Left ventricle myocardium superior (tissue), 1 donor: ENCODE measurements at regions of chr16 and their contacts with region 1.

Region 1: DNA sequence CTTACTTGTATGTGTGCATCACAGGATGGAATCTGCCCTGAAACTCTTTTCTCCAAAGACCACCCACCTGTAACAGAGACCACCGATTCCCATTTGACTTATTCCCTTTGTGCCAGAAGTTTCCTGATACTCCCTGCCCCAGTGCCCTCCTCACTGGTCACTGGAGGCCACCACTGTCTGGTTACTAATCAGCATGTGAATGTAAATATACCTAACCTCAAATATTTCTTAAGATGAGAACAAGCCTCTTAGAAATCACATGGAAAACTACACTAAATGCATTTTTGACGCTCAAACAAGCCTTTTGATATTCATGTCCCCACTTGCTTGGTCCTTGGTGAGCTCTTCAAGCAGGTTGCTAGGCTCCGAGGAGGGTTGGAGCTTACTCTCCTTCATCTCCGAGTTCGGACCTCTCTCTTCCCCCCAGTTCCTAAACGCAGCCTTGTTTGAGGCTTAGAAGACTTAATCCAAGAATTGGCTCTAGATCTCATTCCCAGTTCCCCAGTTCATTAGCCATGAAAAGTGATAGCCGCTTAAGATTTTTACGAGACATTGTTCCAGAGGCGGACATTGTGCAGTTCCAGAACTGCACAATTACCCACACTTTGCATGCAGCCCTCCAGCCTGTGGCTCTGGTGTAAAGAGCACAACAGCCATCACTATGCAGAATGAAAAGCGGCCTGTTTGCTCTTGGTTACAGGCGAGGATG is 579.2 kb upstream of the PSMD7 start:
- DNase-seq: no peak
- ATAC-seq: no peak

Region 2: GRCh38 chr16:73483076-73483791 is 234.2 kb before region 1 on chr16:
- intact Hi-C with region 1: loop called (anchors 5 kb)
- DNase-seq: no peak
- ATAC-seq: no peak